A673 (cell line): ENCODE measurements at regions of chr20 and their contacts with region 1.

Region 1: DNA sequence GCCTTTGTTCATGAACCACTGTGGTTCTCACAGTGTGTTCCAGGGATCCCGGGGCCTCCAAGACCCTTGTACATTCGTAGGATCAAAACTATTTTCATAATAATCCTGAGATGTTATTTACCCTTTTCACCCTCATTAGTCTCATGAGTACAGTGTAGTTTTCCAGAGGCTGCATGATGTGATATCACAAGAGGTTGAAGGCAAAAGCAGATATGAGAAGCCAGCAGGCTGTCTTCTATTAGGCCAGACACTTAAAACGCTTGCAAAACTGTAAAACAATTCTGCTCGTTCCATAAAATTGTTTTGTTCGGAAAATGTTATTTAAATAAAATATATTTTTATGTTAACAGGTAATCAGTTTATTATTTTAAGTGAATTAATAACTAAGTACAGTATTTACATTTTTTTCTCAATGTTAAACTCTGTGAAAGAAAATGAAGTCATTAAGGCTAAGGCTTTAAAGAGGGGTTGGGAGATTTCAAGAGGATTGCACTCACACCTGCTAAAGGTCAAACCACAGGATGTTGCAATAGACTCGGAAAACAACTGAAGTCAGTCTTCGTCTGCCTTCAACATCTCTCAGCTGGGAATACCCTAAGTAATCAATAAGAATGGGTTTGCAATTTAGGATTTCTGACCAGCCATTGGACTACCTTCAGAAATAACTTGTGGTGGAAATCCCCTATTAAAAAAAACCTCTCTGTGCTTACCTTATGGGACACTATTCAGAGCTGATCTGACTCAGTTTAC is 474.2 kb downstream of the KIF16B start:
- DNase-seq: no peak
- H3K4me3 ChIP-seq: no peak overlapping the region
- H3K27ac ChIP-seq: no peak overlapping the region
- H3K4me1 ChIP-seq: no peaks in the 10 kb centered on the region
- H3K27me3 ChIP-seq: no peaks in the 10 kb centered on the region
- CTCF ChIP-seq: no peak

Region 2: DNA sequence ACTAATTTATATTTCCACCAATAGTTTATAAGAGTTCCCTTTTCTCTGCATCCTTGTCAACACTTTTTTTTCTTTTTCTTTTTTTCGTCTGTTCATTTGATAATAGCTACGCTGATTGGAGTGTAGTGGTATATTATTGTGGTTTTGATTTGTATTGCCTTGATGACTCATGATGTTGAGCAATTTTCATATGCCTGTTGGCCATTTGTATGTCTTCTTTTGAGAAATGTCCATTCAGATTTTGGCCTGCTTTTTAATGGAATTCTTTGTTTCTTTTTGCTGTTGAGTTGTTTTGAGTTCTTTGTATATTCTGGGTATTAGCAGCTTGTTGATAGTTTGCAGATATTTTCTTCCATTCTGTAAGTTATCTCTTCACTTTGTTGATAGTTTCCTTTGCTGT is 299.2 kb before region 1 on chr20:
- CTCF ChIA-PET with region 1: no interaction called
- POLR2A ChIA-PET with region 1: no interaction called
- intact Hi-C with region 1: no loop called
- DNase-seq: no peak
- H3K4me3 ChIP-seq: no peak overlapping the region
- H3K27ac ChIP-seq: no peak overlapping the region
- H3K4me1 ChIP-seq: no peaks in the 10 kb centered on the region
- H3K27me3 ChIP-seq: no peaks in the 10 kb centered on the region
- CTCF ChIP-seq: no peak

Region 3: GRCh38 chr20:16036331-16036730 is 62.7 kb before region 1 on chr20:
- CTCF ChIA-PET with region 1: no interaction called
- POLR2A ChIA-PET with region 1: no interaction called
- intact Hi-C with region 1: loop called (anchors 10 kb)
- DNase-seq: no peak
- H3K4me3 ChIP-seq: no peak overlapping the region
- H3K27ac ChIP-seq: no peak overlapping the region
- H3K4me1 ChIP-seq: no peaks in the 10 kb centered on the region
- H3K27me3 ChIP-seq: no peaks in the 10 kb centered on the region
- CTCF ChIP-seq: no peak

Region 4: DNA sequence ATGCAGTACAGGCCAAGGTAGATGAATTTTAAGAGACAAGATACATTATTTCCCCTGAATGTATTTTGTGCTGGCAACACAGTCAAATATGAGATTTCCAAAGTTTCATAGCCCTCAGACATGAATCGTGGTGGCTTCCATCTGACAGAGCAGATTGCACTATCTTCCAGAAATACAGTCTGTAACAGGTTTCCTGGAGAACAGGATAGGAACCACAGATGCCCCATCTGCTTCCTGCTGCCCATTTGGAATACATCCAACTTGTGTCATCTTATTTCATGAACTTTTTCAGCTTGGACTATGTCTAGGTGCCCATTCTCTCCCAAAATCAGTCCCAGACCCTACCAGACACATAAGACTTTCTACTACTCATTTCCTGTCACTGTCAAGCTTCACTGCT is 48.2 kb after region 1 on chr20:
- CTCF ChIA-PET with region 1: no interaction called
- POLR2A ChIA-PET with region 1: no interaction called
- intact Hi-C with region 1: no loop called
- DNase-seq: no peak
- H3K4me3 ChIP-seq: no peak overlapping the region
- H3K27ac ChIP-seq: no peak overlapping the region
- H3K4me1 ChIP-seq: no peaks in the 10 kb centered on the region
- H3K27me3 ChIP-seq: no peaks in the 10 kb centered on the region
- CTCF ChIP-seq: no peak